Right cardiac atrium (tissue), 5 donors: ENCODE measurements at regions of chr20 and their contacts with region 1.

Region 1: GRCh38 chr20:46592580-46593362 is 42.3 kb upstream of the OCSTAMP start:
- DNase-seq: no peak
- ATAC-seq: no peak
- H3K4me3 ChIP-seq: no peak overlapping the region
- H3K27ac ChIP-seq: no peak overlapping the region
- H3K4me1 ChIP-seq: no peaks in the 10 kb centered on the region
- H3K27me3 ChIP-seq: no peaks in the 10 kb centered on the region

Region 2: DNA sequence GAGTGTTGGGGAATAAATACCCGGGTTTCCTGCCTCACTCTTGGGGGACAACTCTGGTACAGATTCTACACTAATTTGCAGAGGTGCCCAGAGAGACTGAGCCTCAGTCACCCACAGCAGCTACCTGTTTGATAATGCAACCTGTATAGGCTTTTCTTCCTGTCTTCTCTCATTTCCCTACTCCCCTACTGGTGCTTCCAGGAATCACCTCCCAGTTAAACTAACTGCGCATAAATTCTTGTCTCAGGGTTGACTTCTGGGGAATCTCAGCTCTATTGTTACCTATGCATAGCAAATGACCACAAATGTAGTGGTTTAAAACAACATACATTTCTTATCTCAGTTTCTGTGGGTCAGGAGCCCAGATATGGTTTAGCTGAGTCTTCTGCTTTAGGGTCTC is 53.7 kb before region 1 on chr20:
- intact Hi-C with region 1: loop called in 1 of 4 experiments (anchors 10 kb)
- DNase-seq: no peak
- ATAC-seq: no peak
- H3K4me3 ChIP-seq: no peak overlapping the region
- H3K27ac ChIP-seq: no peak overlapping the region
- H3K4me1 ChIP-seq: no peaks in the 10 kb centered on the region
- H3K27me3 ChIP-seq: no peaks in the 10 kb centered on the region